OCI-LY7 (cell line): ENCODE measurements at regions of chr2 and their contacts with region 1.

Region 1: DNA sequence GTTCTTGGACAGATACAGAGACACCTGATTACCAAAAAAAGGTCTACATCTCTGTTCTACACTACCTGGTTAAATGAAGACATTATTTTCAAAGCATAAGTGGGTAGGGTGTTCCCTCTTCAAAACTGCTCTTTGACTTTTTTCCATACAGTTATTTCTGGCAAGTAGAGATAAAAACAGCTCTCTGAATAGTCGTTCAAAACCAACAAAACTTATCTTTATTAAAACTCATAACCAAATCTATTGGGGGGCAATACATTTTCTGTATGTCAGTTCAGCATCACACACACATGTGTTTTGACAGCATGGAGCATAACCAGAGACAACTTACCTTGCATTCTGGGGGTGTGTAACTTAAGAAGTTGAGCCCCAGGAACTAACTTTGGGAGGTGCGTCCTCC is 149.0 kb upstream of the EPC2 start:
- DNase-seq: no peak
- H3K4me3 ChIP-seq: no peak overlapping the region
- H3K27ac ChIP-seq: no peak overlapping the region
- H3K4me1 ChIP-seq: no peaks in the 10 kb centered on the region
- CTCF ChIP-seq: no peak

Region 2: GRCh38 chr2:148509288-148509902 is 13.8 kb after region 1 on chr2:
- CTCF ChIA-PET with region 1: no interaction called
- POLR2A ChIA-PET with region 1: interaction called, 10 read pairs
- intact Hi-C with region 1: no loop called
- DNase-seq: peak; percentile 80
- H3K4me3 ChIP-seq: peak overlapping the region; percentile 26
- H3K27ac ChIP-seq: no peak overlapping the region
- H3K4me1 ChIP-seq: no peaks in the 10 kb centered on the region
- CTCF ChIP-seq: peak; percentile 94